Activated CD8-positive, alpha-beta memory T cell treated with anti-CD3 and anti-CD28 coated beads, Interleukin-2, amount 10 ng/mL, durations not matched to agents 7 days and 5 days (primary cell): ENCODE measurements at regions of chr5 and their contacts with region 1.

Region 1: GRCh38 chr5:34898258-34898895 is 16.9 kb downstream of the RAD1 start:
- DNase-seq: peak; percentile 70
- ATAC-seq: peak; percentile 57
- H3K4me3 Mint-ChIP-seq: no peak overlapping the region
- H3K27ac Mint-ChIP-seq: no peak overlapping the region
- H3K4me1 Mint-ChIP-seq: no peaks in the 10 kb centered on the region
- H3K27me3 Mint-ChIP-seq: no peaks in the 10 kb centered on the region

Region 2: DNA sequence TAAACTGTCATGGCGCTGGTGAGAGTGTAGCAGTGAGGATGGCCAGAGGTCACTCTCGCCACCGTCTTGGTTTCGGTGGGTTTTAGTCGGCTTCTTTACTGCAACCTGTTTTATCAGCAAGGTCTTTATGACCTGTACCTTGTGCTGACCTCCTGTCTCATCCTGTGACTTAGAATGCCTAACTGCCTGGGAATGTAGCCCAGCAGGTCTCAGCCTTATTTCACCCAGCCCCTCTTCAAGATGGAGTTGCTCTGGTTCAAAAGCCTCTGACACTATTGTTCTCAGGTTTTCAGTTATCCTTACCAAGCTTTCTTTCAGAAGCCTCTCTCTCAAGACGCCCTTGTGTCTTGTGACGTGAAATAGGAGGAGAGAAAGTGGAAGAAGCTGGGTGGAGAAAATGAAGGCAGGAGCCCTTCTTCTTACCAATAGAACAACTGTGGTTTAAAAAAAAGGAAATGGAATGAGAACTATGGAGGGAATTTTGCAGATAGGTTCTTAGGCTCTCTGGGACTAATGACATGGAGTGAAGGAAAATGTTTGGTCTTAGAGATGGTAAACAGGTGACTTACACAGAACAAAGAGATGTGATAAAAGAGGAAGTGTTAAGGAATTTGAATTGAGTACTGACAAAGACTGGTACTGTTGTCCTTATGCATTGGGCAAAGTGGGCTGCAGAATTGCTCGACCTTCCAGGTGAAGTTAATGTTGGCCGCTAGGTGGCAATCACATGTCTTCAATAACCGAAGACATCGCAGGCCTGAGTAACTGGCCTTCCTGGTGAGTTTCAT is 375.6 kb before region 1 on chr5:
- CTCF ChIA-PET with region 1: interaction called, 20 read pairs
- DNase-seq: peak; percentile 63
- ATAC-seq: peak; percentile 45
- H3K4me3 Mint-ChIP-seq: no peak overlapping the region
- H3K27ac Mint-ChIP-seq: no peak overlapping the region
- H3K4me1 Mint-ChIP-seq: peaks cover 2% of the 10 kb centered on the region
- H3K27me3 Mint-ChIP-seq: peaks cover 10% of the 10 kb centered on the region

Region 3: DNA sequence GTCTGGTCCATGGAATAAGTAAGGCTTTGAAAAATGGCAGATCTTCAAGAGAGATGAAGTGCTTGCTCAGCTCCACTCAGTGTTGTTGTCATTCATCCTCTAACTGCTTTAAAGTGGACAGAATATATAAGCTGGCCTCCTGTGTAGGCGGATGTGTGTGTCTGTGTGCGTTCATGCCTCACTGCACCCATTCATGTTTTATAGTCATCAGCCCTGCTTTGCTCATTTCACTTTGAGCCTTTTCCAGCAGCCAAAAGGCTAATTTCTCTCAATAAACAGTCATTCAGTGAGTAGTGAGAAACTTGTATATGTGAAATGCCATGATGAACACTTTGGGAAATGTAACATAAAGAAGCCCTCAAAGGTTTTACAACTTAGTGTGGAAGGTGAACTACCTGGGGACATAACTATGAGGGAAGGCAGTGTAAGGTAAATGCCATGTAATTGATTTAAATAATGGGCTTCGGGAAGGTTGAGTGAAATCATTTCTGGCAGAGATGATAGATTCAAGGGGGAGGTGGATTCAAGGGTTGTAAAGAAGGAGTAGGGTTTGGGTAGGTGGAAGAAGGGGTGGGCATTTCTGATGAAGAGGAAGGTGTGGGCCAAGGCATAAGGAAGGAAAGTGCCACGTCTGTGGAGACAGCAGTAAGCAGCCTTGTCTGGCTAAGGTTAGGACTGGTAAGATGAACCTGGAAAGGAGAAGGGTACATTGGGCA is 43.8 kb before region 1 on chr5:
- CTCF ChIA-PET with region 1: no interaction called
- DNase-seq: no peak
- ATAC-seq: no peak
- H3K4me3 Mint-ChIP-seq: no peak overlapping the region
- H3K27ac Mint-ChIP-seq: no peak overlapping the region
- H3K4me1 Mint-ChIP-seq: no peaks in the 10 kb centered on the region
- H3K27me3 Mint-ChIP-seq: peaks cover 6% of the 10 kb centered on the region

Region 4: GRCh38 chr5:34915139-34915855 is 16.9 kb after region 1 on chr5 and contains the starts of genes BRIX1 and RAD1:
- CTCF ChIA-PET with region 1: interaction called, 10 read pairs
- DNase-seq: peak; percentile 97
- ATAC-seq: peak; percentile 94
- H3K4me3 Mint-ChIP-seq: no peak within 1 kb of the TSS
- H3K27ac Mint-ChIP-seq: peak within 1 kb of the TSS; percentile 60
- H3K4me1 Mint-ChIP-seq: peaks cover 39% of the 10 kb centered on the region
- H3K27me3 Mint-ChIP-seq: no peaks in the 10 kb centered on the region
- total RNA-seq, gene BRIX1: 42.2 to 58.0 TPM
- total RNA-seq, gene RAD1: 33.2 to 37.7 TPM